Mammary epithelial cell (primary cell): ENCODE measurements at regions of chr12 and their contacts with region 1.

Region 1: GRCh38 chr12:50400598-50401364 is at the start of gene LARP4:
- DNase-seq: peak; percentile 95
- H3K4me3 ChIP-seq: peak within 1 kb of the TSS; percentile 80 to 95 (median 81)
- H3K27ac ChIP-seq: peak within 1 kb of the TSS; percentile 81
- H3K4me1 ChIP-seq: peaks cover 7% of the 10 kb centered on the region
- H3K27me3 ChIP-seq: no peaks in the 10 kb centered on the region
- CTCF ChIP-seq: no peak
- total RNA-seq, gene LARP4: 45.0 to 65.0 TPM

Region 2: DNA sequence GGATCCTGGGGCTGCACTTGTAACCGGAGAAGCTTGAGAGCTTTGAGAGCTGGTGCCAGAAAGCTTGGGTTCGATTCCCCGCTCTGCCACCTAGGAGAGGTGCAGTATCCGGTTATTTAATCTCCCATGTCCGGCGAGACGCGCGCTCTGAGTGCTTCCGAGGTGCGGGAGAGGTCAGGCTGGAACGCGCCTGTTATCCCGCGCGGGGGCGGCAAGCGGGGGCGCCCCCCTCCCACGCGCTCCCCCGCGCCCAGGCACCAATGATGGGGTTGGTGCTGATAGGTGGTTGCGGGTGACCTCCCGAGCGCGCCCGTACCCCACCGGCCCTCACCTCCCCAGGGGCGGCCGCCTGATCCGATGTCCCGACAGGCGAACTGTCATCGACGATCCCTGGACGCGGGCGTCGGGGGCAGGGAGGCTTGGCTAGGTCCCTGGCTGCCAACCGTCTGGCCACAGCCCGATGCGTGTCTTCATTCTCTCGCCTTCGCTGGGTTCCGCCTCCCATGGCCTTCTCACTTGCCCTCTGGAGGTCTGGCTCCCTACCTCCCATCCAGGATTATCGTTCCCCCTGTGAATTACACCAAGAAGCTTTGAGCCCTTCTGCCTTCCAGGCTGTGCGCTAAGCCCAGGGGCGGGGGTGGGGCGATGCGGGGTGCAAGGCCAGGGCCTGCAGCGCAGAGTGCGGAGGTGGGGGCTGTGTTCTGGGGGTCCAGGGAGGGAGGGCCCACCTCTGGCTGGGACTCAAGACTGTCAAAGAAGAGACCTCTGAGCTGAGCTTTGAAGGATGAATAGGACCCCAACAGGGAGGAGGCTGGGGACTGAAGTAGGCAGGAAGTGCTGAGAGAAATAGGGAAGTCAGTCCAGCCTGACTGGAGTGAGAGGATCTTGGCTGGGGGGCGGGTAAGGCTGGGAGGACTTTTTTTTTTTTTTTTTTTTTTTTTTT is 367.9 kb before region 1 on chr12:
- CTCF ChIA-PET with region 1: no interaction called
- dilution Hi-C with region 1: no loop called
- in situ Hi-C with region 1: no loop called
- intact Hi-C with region 1: no loop called
- DNase-seq: no peak
- H3K4me3 ChIP-seq: no peak overlapping the region
- H3K27ac ChIP-seq: no peak overlapping the region
- H3K4me1 ChIP-seq: peaks cover 3% of the 10 kb centered on the region
- H3K27me3 ChIP-seq: no peaks in the 10 kb centered on the region
- CTCF ChIP-seq: no peak

Region 3: DNA sequence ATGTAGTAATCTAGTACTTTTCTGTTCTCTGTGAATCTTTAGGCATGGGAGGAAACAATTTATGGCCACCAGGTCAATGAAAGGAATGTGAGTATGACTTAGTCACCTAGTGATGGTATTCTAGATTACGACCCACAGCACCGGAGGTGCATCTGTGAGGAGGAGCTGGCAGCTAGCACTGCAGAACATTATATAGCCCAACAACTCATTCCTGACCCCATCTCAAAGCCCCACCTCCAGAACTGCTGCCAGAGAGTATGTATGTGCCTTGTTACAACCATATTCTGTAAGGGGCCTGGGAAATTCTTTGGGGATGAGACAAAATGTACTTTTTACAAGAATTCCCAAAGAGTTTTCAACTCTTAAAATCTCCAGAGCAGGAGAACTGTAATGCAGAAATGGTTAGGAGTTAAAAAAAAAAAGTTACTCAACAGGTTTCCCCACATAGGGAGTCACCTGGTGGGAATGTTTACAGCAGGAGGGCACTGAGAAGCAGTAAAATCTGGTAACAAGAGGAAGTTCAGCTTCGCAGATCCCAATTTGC is 198.7 kb before region 1 on chr12:
- CTCF ChIA-PET with region 1: no interaction called
- dilution Hi-C with region 1: no loop called
- in situ Hi-C with region 1: loop called in 1 of 2 experiments (anchors 25 kb)
- intact Hi-C with region 1: loop called (anchors 5 kb)
- DNase-seq: peak; percentile 93
- H3K4me3 ChIP-seq: no peak overlapping the region
- H3K27ac ChIP-seq: peak overlapping the region; percentile 80
- H3K4me1 ChIP-seq: peaks cover 53% of the 10 kb centered on the region
- H3K27me3 ChIP-seq: no peaks in the 10 kb centered on the region
- CTCF ChIP-seq: no peak

Region 4: DNA sequence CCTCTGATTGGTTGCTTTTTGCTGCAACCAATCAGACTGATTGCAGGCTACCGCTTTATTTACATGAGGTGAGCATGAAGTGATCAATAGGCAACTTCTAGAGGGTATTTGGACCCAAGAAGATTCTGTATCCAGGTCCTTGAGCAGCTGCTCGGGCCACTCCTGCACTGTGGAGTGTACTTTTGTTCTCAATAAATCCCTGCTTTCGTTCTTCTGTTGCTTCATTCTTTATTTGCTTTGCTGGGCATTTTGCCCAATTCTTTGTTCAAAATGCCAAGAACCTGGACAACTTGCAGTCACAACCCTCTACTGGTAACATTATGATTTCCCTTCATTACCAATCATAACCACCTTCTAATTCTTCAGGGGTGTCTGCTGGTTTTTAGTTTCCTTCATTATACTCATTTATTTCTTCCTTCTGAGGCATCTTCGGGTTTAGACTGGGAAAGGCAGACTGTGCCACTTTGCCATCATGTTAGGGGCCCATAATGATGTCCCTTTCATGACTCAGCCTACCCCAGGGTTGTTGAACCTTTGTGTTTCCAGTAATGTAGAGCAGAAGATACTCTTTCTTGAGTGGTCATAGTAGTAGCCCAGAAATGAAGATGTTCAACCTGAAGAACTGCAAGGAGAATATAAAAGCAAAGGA is 74.0 kb before region 1 on chr12:
- CTCF ChIA-PET with region 1: no interaction called
- dilution Hi-C with region 1: no loop called
- in situ Hi-C with region 1: no loop called
- intact Hi-C with region 1: loop called (anchors 2 kb)
- DNase-seq: peak; percentile 44
- H3K4me3 ChIP-seq: no peak overlapping the region
- H3K27ac ChIP-seq: no peak overlapping the region
- H3K4me1 ChIP-seq: peaks cover 5% of the 10 kb centered on the region
- H3K27me3 ChIP-seq: no peaks in the 10 kb centered on the region
- CTCF ChIP-seq: no peak

Region 5: DNA sequence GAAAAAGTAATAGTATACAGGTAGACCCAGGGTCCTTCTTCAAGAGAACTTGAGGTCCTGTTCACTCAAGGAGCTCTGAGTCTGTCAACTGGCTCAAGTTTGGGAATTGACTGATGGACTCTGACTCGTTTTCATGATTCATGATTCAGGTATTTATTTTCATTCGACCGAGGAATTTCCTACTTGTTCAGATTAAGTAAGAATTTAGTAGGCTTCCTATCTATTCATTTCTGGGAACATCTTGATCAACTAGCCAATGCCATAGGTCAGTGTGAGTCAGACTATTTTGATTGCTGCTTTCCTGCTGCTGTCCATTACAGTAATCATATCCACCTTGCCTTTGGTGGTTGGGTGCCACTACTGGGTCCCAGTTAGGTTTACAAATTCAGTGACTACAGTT is 10.5 kb before region 1 on chr12:
- CTCF ChIA-PET with region 1: no interaction called
- dilution Hi-C with region 1: no loop called
- in situ Hi-C with region 1: no loop called
- intact Hi-C with region 1: loop called (anchors 1 kb)
- DNase-seq: peak; percentile 92
- H3K4me3 ChIP-seq: no peak overlapping the region
- H3K27ac ChIP-seq: no peak overlapping the region
- H3K4me1 ChIP-seq: peaks cover 15% of the 10 kb centered on the region
- H3K27me3 ChIP-seq: no peaks in the 10 kb centered on the region
- CTCF ChIP-seq: no peak

Region 6: GRCh38 chr12:50572271-50572670 is 171.5 kb after region 1 on chr12:
- CTCF ChIA-PET with region 1: no interaction called
- dilution Hi-C with region 1: no loop called
- in situ Hi-C with region 1: no loop called
- intact Hi-C with region 1: no loop called
- DNase-seq: peak; percentile 78
- H3K4me3 ChIP-seq: no peak overlapping the region
- H3K27ac ChIP-seq: peak overlapping the region; percentile 26
- H3K4me1 ChIP-seq: peaks cover 35% of the 10 kb centered on the region
- H3K27me3 ChIP-seq: no peaks in the 10 kb centered on the region
- CTCF ChIP-seq: no peak

Region 7: GRCh38 chr12:50597200-50598195 is 196.7 kb after region 1 on chr12:
- CTCF ChIA-PET with region 1: no interaction called
- dilution Hi-C with region 1: no loop called
- in situ Hi-C with region 1: no loop called
- intact Hi-C with region 1: no loop called
- DNase-seq: peak; percentile 83
- H3K4me3 ChIP-seq: no peak overlapping the region
- H3K27ac ChIP-seq: peak overlapping the region; percentile 62
- H3K4me1 ChIP-seq: peaks cover 13% of the 10 kb centered on the region
- H3K27me3 ChIP-seq: no peaks in the 10 kb centered on the region
- CTCF ChIP-seq: peak in 1 of 2 donors; percentile 19

Region 8: DNA sequence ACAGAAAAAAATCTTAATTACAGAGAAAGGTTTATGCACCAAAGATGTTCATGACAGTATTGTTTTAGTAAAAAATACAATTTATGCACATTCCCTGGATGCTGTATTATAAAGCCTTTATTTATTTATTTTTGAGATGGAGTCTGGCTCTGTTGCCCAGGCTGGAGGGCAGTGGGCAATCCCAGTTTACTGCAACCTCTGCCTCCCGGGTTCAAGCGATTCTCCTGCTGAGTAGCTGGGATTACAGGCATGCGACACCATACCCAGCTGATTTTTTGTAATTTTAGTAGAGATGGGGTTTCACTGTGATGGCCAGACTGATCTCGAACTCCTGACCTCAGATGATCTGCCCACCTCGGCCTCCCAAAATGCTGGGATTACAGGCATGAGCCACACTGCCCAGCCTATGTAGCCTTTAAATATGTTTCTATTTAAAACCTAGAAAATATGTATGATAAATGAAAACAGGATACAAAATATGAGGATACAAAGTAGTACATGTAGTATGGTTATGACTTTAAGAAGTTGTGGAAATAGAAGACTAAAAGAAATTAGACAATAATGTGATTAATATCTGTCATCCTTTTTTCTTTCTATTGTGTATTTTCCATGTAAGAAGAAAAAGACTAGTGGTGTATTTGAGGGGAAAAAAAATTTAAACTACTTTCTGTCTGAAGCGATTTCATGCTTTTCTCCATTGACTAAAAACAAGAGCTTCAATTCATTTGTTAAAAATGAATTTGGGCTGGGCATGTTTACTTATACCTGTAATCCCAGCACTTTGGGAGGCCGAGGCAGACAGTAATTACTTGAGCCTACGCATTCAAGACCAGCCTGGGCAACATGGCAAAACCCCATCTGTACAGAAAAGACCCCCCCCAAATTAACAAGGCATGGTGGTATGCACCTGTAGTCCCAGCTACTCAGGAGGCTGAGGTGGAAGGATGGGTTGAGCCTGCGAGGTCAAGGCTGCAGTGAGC is 376.3 kb after region 1 on chr12:
- CTCF ChIA-PET with region 1: no interaction called
- dilution Hi-C with region 1: no loop called
- in situ Hi-C with region 1: no loop called
- intact Hi-C with region 1: no loop called
- DNase-seq: no peak
- H3K4me3 ChIP-seq: no peak overlapping the region
- H3K27ac ChIP-seq: no peak overlapping the region
- H3K4me1 ChIP-seq: no peaks in the 10 kb centered on the region
- H3K27me3 ChIP-seq: no peaks in the 10 kb centered on the region
- CTCF ChIP-seq: no peak